HepG2 (cell line): ENCODE measurements at regions of chr16 and their contacts with region 1.

Region 1: DNA sequence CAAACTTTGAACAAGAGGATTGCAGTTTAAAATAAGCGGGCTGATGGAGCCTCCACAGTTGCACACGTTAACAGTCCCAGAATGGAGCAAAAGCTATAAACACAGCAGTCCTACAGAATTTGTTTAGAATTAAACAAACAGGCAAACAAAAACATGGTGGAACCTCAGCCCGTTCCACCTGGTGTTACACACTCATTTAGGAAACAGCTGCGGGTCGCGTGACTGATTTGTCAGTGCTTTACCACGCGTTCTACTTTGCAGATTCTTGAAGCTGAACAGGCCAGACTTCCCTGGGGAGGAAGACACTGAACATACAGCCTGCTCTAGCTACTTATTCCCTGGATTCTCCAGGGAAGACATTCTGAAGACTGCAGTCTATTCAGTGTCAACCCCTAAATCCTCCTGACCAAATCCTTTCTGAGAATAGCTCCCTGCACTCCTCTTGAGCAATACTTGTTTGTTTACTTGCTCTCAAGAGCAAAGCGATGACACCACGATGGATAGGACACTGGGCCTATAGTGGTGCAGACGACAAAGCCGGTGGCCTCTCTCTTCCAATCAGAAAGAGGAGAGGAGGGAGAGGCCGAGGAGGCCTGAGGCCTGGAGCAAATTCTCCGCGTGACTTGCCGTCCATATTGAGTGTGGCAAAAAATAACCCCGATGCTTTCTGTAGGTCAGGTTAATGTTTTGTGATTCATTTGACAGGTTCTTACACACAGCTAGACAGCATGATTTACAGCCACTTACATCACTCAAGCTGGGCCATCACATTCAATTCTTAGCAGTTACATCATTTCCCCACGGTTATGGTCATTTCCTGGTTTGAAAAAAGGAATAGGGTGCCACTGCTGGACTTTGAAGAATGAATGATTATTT is 4.0 kb upstream of the MAP1LC3B start:
- DNase-seq: peak; percentile 100
- ATAC-seq: peak; percentile 76
- H3K4me3 ChIP-seq: peak overlapping the region; percentile 17 to 56 (median 35); a peak in 5 of 6 replicates
- H3K27ac ChIP-seq: peak overlapping the region; percentile 83
- H3K4me1 ChIP-seq: peaks cover 60% of the 10 kb centered on the region
- H3K27me3 ChIP-seq: no peaks in the 10 kb centered on the region; a peak in 1 of 5 replicates
- CTCF ChIP-seq: peak; percentile 14; the same call in 1 of the 2 replicates
- EP300 ChIP-seq: peak; percentile 61 to 87
- POLR2A ChIP-seq: peak in 1 of 2 experiments; percentile 83; a peak in 2 of 4 replicates
- RAD21 ChIP-seq: peak; percentile 57; the same call in 1 of the 2 replicates

Region 2: DNA sequence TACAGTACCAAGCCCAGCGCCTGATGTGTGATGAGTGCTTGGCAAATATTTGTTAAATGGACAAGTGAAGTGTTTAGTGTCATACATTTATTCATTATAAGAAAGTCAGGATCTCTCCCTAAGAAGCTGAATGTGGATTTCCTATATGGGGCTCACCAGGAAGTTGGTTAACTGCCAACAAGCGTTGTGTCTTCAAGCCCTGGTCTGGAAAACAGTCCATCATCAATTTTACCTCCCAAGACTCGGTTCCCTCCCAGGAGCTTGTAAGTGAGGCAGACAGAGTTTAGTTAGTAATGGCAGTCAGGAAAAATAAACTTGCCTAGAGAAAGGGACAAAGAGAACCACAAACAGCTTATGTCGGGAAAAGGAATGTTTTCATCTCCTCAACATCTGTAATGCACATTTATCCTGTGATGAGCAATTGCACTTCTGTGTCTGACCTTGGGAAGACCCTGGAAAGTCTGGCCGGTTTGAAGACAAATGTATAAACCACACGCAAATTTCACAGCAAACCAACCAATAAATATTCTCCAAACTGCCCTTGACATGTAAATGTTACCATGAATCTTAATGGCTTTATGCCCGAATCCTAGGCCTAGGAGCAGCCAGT is 99.3 kb before region 1 on chr16:
- CTCF ChIA-PET with region 1: no interaction called
- POLR2A ChIA-PET with region 1: no interaction called
- in situ Hi-C with region 1: no loop called
- intact Hi-C with region 1: no loop called
- DNase-seq: no peak
- ATAC-seq: no peak
- H3K4me3 ChIP-seq: no peak overlapping the region
- H3K27ac ChIP-seq: no peak overlapping the region
- H3K4me1 ChIP-seq: no peaks in the 10 kb centered on the region
- H3K27me3 ChIP-seq: no peaks in the 10 kb centered on the region
- CTCF ChIP-seq: no peak
- EP300 ChIP-seq: no peak
- POLR2A ChIP-seq: no peak
- RAD21 ChIP-seq: no peak

Region 3: DNA sequence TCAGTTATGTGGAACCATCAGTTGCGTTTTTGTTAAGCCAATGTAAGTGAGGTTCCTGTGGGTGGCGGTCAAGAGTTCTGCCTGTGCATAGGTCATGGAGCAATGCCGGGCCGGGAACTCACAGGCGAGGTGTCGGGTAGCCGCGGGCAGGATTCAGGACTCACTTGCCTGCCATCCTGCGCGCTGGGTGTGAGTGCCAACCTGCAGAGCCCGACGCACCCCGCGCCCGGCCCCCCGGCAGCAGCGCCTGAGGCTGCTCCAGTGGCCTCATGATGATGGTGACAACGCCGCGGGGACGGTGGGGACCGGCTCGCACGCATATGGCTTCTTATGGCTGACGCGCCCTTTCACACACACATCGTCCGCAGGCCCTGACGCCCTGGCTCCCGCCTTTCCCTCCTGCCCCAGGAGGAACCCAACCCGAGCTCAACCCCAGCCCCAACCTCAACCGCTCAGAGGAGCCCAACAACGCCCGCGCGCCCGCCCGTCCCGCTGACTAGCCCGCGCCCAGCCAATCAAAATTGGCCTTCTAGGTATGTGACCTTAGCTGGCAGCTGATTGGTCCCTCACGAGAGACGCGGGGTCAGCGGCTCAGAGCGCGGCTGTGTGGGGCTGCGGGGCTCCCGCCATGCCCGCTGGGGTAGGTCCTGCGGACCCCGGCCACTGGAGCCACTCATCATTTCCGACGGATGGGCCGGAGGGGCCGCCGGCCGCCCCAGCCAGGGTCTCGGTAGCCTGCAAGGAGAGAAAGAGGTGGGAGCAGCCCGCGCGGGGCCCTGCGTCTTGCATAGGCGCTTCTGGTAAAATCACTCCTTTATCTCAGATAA is 71.0 kb before region 1 on chr16 and contains the start of gene C16orf95:
- CTCF ChIA-PET with region 1: no interaction called
- POLR2A ChIA-PET with region 1: interaction called, 85 read pairs
- in situ Hi-C with region 1: no loop called
- intact Hi-C with region 1: loop called (anchors 2 kb)
- DNase-seq: peak; percentile 95
- ATAC-seq: peak; percentile 89
- H3K4me3 ChIP-seq: peak within 1 kb of the TSS; percentile 81 to 98 (median 93)
- H3K27ac ChIP-seq: peak within 1 kb of the TSS; percentile 91
- H3K4me1 ChIP-seq: peaks cover 25% of the 10 kb centered on the region
- H3K27me3 ChIP-seq: no peaks in the 10 kb centered on the region; a peak in 1 of 5 replicates
- CTCF ChIP-seq: peak; percentile 93
- EP300 ChIP-seq: no peak
- POLR2A ChIP-seq: peak; percentile 81 to 82
- RAD21 ChIP-seq: peak; percentile 79
- total RNA-seq, gene C16orf95: 7.2 and 8.6 TPM in 2 replicates

Region 4: GRCh38 chr16:87332150-87332549 is 56.0 kb before region 1 on chr16:
- CTCF ChIA-PET with region 1: no interaction called
- POLR2A ChIA-PET with region 1: interaction called, 20 read pairs
- in situ Hi-C with region 1: no loop called
- intact Hi-C with region 1: no loop called
- DNase-seq: no peak
- ATAC-seq: no peak
- H3K4me3 ChIP-seq: no peak overlapping the region
- H3K27ac ChIP-seq: no peak overlapping the region
- H3K4me1 ChIP-seq: no peaks in the 10 kb centered on the region
- H3K27me3 ChIP-seq: no peaks in the 10 kb centered on the region
- CTCF ChIP-seq: no peak
- EP300 ChIP-seq: no peak
- POLR2A ChIP-seq: peak in 1 of 2 experiments; percentile 15; a peak in 1 of 4 replicates
- RAD21 ChIP-seq: no peak

Region 5: GRCh38 chr16:87363771-87364455 is 24.3 kb before region 1 on chr16:
- CTCF ChIA-PET with region 1: no interaction called
- POLR2A ChIA-PET with region 1: interaction called, 265 read pairs
- in situ Hi-C with region 1: no loop called
- intact Hi-C with region 1: no loop called
- DNase-seq: no peak
- ATAC-seq: peak; percentile 8; the same call in 2 of the 3 replicates
- H3K4me3 ChIP-seq: no peak overlapping the region
- H3K27ac ChIP-seq: no peak overlapping the region
- H3K4me1 ChIP-seq: peaks cover 59% of the 10 kb centered on the region
- H3K27me3 ChIP-seq: no peaks in the 10 kb centered on the region
- CTCF ChIP-seq: no peak
- EP300 ChIP-seq: no peak
- POLR2A ChIP-seq: no peak
- RAD21 ChIP-seq: no peak

Region 6: GRCh38 chr16:87404764-87405625 is 16.8 kb after region 1 on chr16:
- CTCF ChIA-PET with region 1: no interaction called
- POLR2A ChIA-PET with region 1: interaction called, 16 read pairs
- in situ Hi-C with region 1: no loop called
- intact Hi-C with region 1: no loop called
- DNase-seq: no peak
- ATAC-seq: peak; percentile 36
- H3K4me3 ChIP-seq: no peak overlapping the region
- H3K27ac ChIP-seq: no peak overlapping the region
- H3K4me1 ChIP-seq: no peaks in the 10 kb centered on the region
- H3K27me3 ChIP-seq: no peaks in the 10 kb centered on the region
- CTCF ChIP-seq: no peak
- EP300 ChIP-seq: no peak
- POLR2A ChIP-seq: peak; percentile 38 to 53; a peak in 3 of 4 replicates
- RAD21 ChIP-seq: no peak

Region 7: GRCh38 chr16:87416826-87417527 is 28.8 kb after region 1 on chr16:
- CTCF ChIA-PET with region 1: no interaction called
- POLR2A ChIA-PET with region 1: no interaction called
- in situ Hi-C with region 1: no loop called
- intact Hi-C with region 1: no loop called
- DNase-seq: peak; percentile 29
- ATAC-seq: no peak
- H3K4me3 ChIP-seq: no peak overlapping the region
- H3K27ac ChIP-seq: no peak overlapping the region
- H3K4me1 ChIP-seq: no peaks in the 10 kb centered on the region
- H3K27me3 ChIP-seq: no peaks in the 10 kb centered on the region
- CTCF ChIP-seq: peak; percentile 26; the same call in 1 of the 2 replicates
- EP300 ChIP-seq: no peak
- POLR2A ChIP-seq: no peak
- RAD21 ChIP-seq: no peak

Region 8: GRCh38 chr16:87853411-87854052 is 465.4 kb after region 1 on chr16:
- CTCF ChIA-PET with region 1: no interaction called
- POLR2A ChIA-PET with region 1: no interaction called
- in situ Hi-C with region 1: loop called (anchors 25 kb)
- intact Hi-C with region 1: loop called (anchors 10 kb)
- DNase-seq: peak; percentile 89
- ATAC-seq: peak; percentile 2
- H3K4me3 ChIP-seq: peak overlapping the region in 2 of 3 experiments; percentile 18 to 62; a peak in 4 of 6 replicates
- H3K27ac ChIP-seq: peak overlapping the region; percentile 98
- H3K4me1 ChIP-seq: peaks cover 100% of the 10 kb centered on the region
- H3K27me3 ChIP-seq: no peaks in the 10 kb centered on the region
- CTCF ChIP-seq: peak; percentile 39
- EP300 ChIP-seq: peak; percentile 12 to 63; a peak in 3 of 4 replicates
- POLR2A ChIP-seq: peak in 1 of 2 experiments; percentile 82; a peak in 2 of 4 replicates
- RAD21 ChIP-seq: peak; percentile 36; the same call in 1 of the 2 replicates